ENCODE measurements at regions of chr10 and their contacts with region 1.

Region 1: DNA sequence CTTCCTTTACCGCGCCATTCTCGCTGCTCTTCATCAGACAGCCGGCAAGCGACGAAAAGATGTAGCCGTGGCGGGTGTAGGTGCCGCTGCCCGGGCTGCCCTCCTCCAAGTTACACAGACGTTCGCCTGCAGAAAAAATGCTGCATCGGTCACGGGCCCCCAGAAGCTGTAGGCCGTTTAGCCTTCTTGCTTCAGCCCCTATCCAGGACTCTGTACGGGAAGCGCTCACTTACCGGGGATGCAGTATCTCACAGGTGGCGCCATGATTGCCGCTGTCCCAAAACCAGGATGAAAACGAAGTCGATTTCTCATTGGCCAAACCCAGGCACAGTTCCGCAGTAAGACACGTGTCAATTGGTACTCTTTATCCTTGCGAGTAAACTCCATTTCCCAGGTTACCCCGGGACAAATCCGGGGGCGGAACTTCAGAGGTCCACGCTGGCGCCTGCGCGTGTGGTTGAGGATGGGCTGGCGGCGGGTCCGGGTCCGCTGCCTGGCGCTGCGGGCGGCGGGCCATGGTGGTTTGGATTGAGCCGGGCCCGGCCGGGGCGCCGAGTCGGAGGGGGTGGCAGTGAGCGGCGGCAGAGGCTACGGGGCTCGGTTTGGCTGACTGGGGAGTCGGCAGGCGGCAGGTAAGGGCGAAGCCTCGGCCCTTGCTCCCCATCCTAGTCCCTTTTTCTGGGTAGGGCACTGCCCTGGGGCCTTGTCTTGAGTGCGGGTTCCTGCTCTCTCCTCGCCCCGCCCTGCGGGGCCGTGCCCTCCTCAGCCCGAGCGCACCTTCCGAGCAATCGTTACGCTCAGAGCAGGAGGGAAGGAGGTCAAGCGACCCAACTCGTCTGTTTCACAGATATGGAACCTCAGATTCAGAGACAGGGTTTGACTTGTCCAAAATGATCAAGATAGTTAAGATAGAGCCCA is at the starts of genes EXOSC1 and ZDHHC16:
- DNase-seq: peak; percentile 95
- H3K4me3 Mint-ChIP-seq: peak within 1 kb of the TSS; percentile 86
- H3K27ac Mint-ChIP-seq: peak within 1 kb of the TSS; percentile 80
- H3K4me1 Mint-ChIP-seq: peaks cover 53% of the 10 kb centered on the region
- H3K27me3 Mint-ChIP-seq: no peaks in the 10 kb centered on the region
- total RNA-seq, gene EXOSC1: 54.9 to 64.0 TPM
- total RNA-seq, gene ZDHHC16: 20.7 to 26.5 TPM

Region 2: GRCh38 chr10:96967847-96968246 is 478.1 kb before region 1 on chr10:
- CTCF ChIA-PET with region 1: no interaction called
- intact Hi-C with region 1: no loop called
- DNase-seq: no peak
- H3K4me3 Mint-ChIP-seq: no peak overlapping the region
- H3K27ac Mint-ChIP-seq: no peak overlapping the region
- H3K4me1 Mint-ChIP-seq: no peaks in the 10 kb centered on the region
- H3K27me3 Mint-ChIP-seq: no peaks in the 10 kb centered on the region

Region 3: DNA sequence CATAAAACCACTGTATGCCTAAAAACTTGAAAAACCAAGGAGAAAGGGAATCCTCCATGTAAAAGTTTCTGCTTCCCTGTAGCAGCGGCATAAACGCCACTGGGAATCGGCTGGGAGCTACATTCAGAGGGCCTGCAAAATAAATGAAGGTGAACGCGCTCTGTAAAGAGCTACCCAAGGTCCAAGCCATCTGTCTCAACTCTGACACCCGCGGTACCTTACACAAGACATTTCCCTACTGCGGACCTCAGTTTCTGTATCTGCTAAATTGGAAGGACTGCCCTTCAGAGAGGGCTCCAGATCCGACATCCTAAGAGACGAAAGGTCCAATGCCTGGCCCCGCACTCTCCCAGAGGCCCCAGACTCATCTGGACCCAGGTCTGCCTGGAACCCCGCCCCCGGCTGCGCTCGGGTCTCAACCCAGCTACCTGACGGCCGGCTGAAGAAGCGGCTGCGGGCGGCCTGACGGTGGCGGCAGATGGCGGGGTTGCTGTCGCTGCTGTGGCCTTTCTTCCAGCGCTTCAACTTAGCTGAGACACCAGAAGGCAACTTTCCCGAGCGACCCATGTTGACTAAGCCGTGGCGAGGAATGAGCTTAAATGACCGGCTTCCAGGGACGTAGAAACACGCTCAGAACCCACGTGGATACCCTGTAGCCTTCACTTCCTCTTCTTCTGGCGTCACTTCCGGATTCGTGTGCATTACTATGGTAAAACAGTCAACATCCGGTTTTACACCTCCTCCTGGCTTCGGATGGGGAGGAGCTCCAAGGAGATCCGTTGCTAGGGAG is 45.1 kb before region 1 on chr10 and contains the start of gene RRP12:
- CTCF ChIA-PET with region 1: interaction called, 6 read pairs
- intact Hi-C with region 1: loop called (anchors 1 kb)
- DNase-seq: peak; percentile 92
- H3K4me3 Mint-ChIP-seq: peak within 1 kb of the TSS; percentile 92
- H3K27ac Mint-ChIP-seq: peak within 1 kb of the TSS; percentile 83
- H3K4me1 Mint-ChIP-seq: peaks cover 15% of the 10 kb centered on the region
- H3K27me3 Mint-ChIP-seq: no peaks in the 10 kb centered on the region
- total RNA-seq, gene RRP12: 51.0 to 55.2 TPM

Region 4: DNA sequence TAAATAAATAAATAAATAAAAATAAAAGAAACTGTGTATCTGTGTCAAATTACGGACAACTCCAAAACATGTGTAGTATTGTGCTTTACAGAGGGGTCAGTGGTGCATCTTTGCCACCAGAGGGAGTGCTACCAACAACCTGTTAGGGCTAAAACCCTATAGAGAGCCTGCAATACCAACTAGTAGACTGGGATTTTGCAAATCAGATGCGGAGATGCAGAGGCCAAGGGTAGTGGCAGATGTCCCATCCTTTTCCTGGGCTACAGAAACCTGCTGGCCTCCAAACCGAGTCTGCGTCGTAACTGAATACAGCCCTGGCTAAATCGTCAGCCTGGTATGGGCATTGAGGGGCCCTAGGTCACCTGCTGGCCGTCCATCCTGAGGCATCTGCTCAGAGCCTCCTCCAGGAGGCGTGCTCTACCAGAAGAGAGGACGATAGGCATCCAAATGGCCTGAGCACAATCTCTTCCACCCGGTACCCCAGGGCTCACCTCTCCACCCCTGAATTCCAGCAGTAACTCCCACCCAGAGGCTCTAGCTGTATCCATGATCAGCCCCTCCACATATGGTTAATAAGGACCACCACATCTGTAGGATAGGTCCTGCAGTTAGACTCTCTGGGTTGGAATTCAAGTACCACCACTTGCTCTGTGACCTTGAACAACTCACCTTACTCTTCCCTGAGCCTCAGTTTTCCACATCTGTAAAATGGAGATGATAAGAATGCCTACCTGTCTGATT is 38.6 kb before region 1 on chr10:
- CTCF ChIA-PET with region 1: interaction called, 49 read pairs
- intact Hi-C with region 1: loop called (anchors 1 kb)
- DNase-seq: peak; percentile 75
- H3K4me3 Mint-ChIP-seq: no peak overlapping the region
- H3K27ac Mint-ChIP-seq: peak overlapping the region; percentile 25
- H3K4me1 Mint-ChIP-seq: peaks cover 10% of the 10 kb centered on the region
- H3K27me3 Mint-ChIP-seq: no peaks in the 10 kb centered on the region

Region 5: GRCh38 chr10:97425964-97426775 is 19.8 kb before region 1 on chr10 and contains the start of gene PGAM1:
- CTCF ChIA-PET with region 1: interaction called, 8 read pairs
- intact Hi-C with region 1: loop called (anchors 1 kb)
- DNase-seq: peak; percentile 95
- H3K4me3 Mint-ChIP-seq: peak within 1 kb of the TSS; percentile 90
- H3K27ac Mint-ChIP-seq: peak within 1 kb of the TSS; percentile 98
- H3K4me1 Mint-ChIP-seq: peaks cover 50% of the 10 kb centered on the region
- H3K27me3 Mint-ChIP-seq: no peaks in the 10 kb centered on the region
- total RNA-seq, gene PGAM1: 1,371 to 1,393 TPM

Region 6: DNA sequence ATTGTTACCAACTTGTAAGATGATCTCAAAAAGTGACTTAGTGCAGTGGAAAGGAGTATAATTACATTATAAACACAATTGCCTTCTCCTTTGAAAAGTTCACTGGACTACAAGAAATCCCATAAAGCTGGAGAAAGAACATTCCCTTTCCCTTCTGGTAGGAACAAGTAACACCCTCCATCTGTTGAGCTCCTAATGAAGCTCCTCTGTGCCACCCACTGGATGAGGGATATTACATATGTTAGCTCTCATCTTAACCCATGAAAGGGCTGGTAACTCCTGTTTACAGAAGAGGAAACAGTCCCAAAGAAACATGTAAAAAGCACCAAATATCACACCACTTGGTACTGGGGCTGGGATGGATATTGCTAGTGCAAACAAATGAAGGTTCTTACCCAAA is 11.9 kb before region 1 on chr10:
- CTCF ChIA-PET with region 1: interaction called, 4 read pairs
- intact Hi-C with region 1: loop called (anchors 1 kb)
- DNase-seq: no peak
- H3K4me3 Mint-ChIP-seq: no peak overlapping the region
- H3K27ac Mint-ChIP-seq: peak overlapping the region; percentile 89
- H3K4me1 Mint-ChIP-seq: peaks cover 19% of the 10 kb centered on the region
- H3K27me3 Mint-ChIP-seq: no peaks in the 10 kb centered on the region

Region 7: GRCh38 chr10:97640174-97640867 is 194.3 kb after region 1 on chr10 and contains the start of gene PI4K2A:
- CTCF ChIA-PET with region 1: no interaction called
- intact Hi-C with region 1: loop called (anchors 2 kb)
- DNase-seq: peak; percentile 100
- H3K4me3 Mint-ChIP-seq: peak within 1 kb of the TSS; percentile 93
- H3K27ac Mint-ChIP-seq: peak within 1 kb of the TSS; percentile 73
- H3K4me1 Mint-ChIP-seq: peaks cover 18% of the 10 kb centered on the region
- H3K27me3 Mint-ChIP-seq: no peaks in the 10 kb centered on the region
- total RNA-seq, gene PI4K2A: 8.9 to 9.4 TPM

Measured in activated naive CD4-positive, alpha-beta T cell treated with anti-CD3 and anti-CD28 coated beads for 36 hours (primary cell).